PC-9 (cell line): ENCODE measurements at regions of chr3 and their contacts with region 1.

Region 1: DNA sequence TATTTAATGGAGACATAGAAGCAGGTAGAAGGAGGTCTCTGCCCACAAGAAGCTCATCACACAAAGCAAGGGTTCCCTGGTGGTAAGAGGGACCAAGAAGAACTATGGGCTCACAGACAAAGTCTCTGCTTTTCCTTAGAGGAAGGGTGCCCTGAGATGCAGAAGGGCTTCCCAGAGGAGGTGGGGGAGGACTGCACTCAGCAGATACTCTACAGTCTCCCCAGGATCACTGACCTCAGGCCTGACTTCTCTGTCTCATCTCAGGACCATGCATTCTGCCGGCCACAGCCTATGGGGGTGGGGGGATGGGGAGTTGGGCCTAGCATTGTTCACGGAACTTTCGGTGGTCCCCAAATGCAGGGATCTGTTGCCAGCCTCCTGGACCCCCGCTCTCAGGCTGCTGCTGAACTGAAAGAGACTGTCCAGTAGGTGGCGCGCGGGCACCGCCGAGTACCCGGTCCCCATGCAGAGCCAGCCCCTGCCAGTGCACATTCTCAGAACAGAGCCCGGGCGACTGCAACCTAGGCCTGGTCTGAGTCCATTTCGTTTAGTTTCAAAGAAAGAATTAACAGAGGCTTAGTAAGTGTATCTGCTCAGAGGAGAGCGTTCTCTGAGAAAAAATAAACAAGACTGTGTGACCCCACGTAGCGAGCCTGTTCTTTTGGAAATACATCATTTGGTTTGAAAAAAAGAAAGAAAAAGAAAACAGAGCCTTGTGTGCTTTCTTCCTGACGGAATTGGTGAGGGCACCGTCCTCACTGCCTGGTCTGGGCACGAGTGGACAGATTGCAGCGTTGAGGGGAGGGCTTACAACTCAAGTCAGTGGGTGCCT is 74.1 kb downstream of the LRTM1 start:
- DNase-seq: peak in 1 of 2 experiments; percentile 67
- H3K4me3 ChIP-seq: no peak overlapping the region
- H3K27ac ChIP-seq: no peak overlapping the region
- H3K4me1 ChIP-seq: no peaks in the 10 kb centered on the region
- H3K27me3 ChIP-seq: no peaks in the 10 kb centered on the region
- CTCF ChIP-seq: peak; percentile 93

Region 2: DNA sequence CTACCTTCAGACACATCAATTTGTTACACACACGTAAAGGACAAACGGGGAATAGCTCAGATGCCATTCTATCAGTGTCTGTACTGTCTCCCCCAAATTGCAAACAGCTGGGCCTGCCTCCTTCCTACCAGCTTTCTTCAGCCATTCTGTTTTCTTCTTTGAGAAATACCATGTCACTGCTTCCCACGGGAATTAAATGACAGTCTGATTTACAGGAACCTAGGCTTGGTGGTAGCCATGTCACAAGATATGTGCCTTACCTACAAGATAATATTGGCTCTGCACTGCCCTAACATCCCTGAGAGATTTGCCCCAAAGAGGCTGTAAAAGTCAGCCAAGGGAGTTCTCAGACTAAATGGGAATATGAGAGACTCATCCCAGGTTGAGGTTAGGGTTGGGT is 234.3 kb before region 1 on chr3:
- CTCF ChIA-PET with region 1: no interaction called
- POLR2A ChIA-PET with region 1: no interaction called
- intact Hi-C with region 1: no loop called
- DNase-seq: no peak
- H3K4me3 ChIP-seq: no peak overlapping the region
- H3K27ac ChIP-seq: no peak overlapping the region
- H3K4me1 ChIP-seq: no peaks in the 10 kb centered on the region
- H3K27me3 ChIP-seq: peaks cover 25% of the 10 kb centered on the region
- CTCF ChIP-seq: no peak

Region 3: GRCh38 chr3:54649551-54649950 is 204.2 kb before region 1 on chr3:
- CTCF ChIA-PET with region 1: no interaction called
- POLR2A ChIA-PET with region 1: no interaction called
- intact Hi-C with region 1: no loop called
- DNase-seq: no peak
- H3K4me3 ChIP-seq: no peak overlapping the region
- H3K27ac ChIP-seq: no peak overlapping the region
- H3K4me1 ChIP-seq: no peaks in the 10 kb centered on the region
- H3K27me3 ChIP-seq: no peaks in the 10 kb centered on the region
- CTCF ChIP-seq: no peak

Region 4: DNA sequence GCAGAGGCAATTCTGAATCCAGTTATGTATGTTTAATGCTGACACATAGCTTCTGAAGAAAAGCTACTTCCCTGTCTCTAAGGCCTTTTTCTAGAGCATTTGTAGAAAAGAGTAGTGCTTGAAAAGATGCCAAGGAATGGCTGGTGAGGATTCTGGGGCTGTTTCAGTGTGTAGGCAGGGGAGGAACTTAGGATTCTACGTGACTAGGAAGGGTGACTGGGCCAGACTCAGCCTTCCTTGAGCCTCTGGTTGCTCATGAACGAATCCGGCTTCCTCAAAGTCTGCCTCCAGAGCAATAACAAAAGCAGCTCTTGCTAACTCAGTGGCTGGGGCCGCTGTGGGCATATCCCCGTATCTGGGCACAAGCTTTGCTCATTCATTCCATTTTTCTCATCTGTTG is 738.1 kb after region 1 on chr3:
- CTCF ChIA-PET with region 1: no interaction called
- POLR2A ChIA-PET with region 1: no interaction called
- intact Hi-C with region 1: loop called (anchors 10 kb)
- DNase-seq: no peak
- H3K4me3 ChIP-seq: no peak overlapping the region
- H3K27ac ChIP-seq: peak overlapping the region; percentile 85
- H3K4me1 ChIP-seq: peaks cover 66% of the 10 kb centered on the region
- H3K27me3 ChIP-seq: no peaks in the 10 kb centered on the region
- CTCF ChIP-seq: no peak

Region 5: GRCh38 chr3:56042326-56042951 is 1188.7 kb after region 1 on chr3:
- CTCF ChIA-PET with region 1: no interaction called
- POLR2A ChIA-PET with region 1: no interaction called
- intact Hi-C with region 1: loop called (anchors 5 kb)
- DNase-seq: peak; percentile 1 to 50
- H3K4me3 ChIP-seq: no peak overlapping the region
- H3K27ac ChIP-seq: no peak overlapping the region
- H3K4me1 ChIP-seq: no peaks in the 10 kb centered on the region
- H3K27me3 ChIP-seq: peaks cover 3% of the 10 kb centered on the region; the same call in 1 of the 2 replicates
- CTCF ChIP-seq: peak; percentile 71